ENCODE measurements at regions of chr1 and their contacts with region 1.

Region 1: GRCh38 chr1:113684153-113684541 is 75.1 kb downstream of the PHTF1 start:
- DNase-seq: no peak
- H3K4me3 ChIP-seq: no peak overlapping the region
- H3K27ac ChIP-seq: no peak overlapping the region
- H3K4me1 ChIP-seq: no peaks in the 10 kb centered on the region
- H3K27me3 ChIP-seq: no peaks in the 10 kb centered on the region
- CTCF ChIP-seq: no peak

Region 2: GRCh38 chr1:113714606-113715275 is 30.6 kb after region 1 on chr1:
- CTCF ChIA-PET with region 1: no interaction called
- dilution Hi-C with region 1: no loop called
- in situ Hi-C with region 1: no loop called
- intact Hi-C with region 1: no loop called
- DNase-seq: no peak
- H3K4me3 ChIP-seq: no peak overlapping the region
- H3K27ac ChIP-seq: no peak overlapping the region
- H3K4me1 ChIP-seq: no peaks in the 10 kb centered on the region
- H3K27me3 ChIP-seq: no peaks in the 10 kb centered on the region
- CTCF ChIP-seq: no peak

Region 3: GRCh38 chr1:113734357-113735055 is 50.4 kb after region 1 on chr1:
- CTCF ChIA-PET with region 1: no interaction called
- dilution Hi-C with region 1: loop called (anchors 5 kb)
- in situ Hi-C with region 1: no loop called
- intact Hi-C with region 1: no loop called
- DNase-seq: no peak
- H3K4me3 ChIP-seq: no peak overlapping the region
- H3K27ac ChIP-seq: no peak overlapping the region
- H3K4me1 ChIP-seq: no peaks in the 10 kb centered on the region
- H3K27me3 ChIP-seq: no peaks in the 10 kb centered on the region
- CTCF ChIP-seq: no peak

Region 4: GRCh38 chr1:113759333-113760101 is 75.4 kb after region 1 on chr1 and contains the start of gene PHTF1:
- CTCF ChIA-PET with region 1: no interaction called
- dilution Hi-C with region 1: no loop called
- in situ Hi-C with region 1: no loop called
- intact Hi-C with region 1: no loop called
- DNase-seq: peak; percentile 72
- H3K4me3 ChIP-seq: peak within 1 kb of the TSS; percentile 78 to 96 (median 90)
- H3K27ac ChIP-seq: peak within 1 kb of the TSS; percentile 83
- H3K4me1 ChIP-seq: peaks cover 8% of the 10 kb centered on the region
- H3K27me3 ChIP-seq: no peaks in the 10 kb centered on the region
- CTCF ChIP-seq: no peak
- total RNA-seq, gene PHTF1: 16.6 to 21.0 TPM